Activated CD4-positive, alpha-beta memory T cell treated with anti-CD3 and anti-CD28 coated beads for 36 hours (primary cell): ENCODE measurements at regions of chr1 and their contacts with region 1.

Region 1: GRCh38 chr1:70354332-70355110 is at the start of gene ANKRD13C:
- DNase-seq: peak; percentile 95
- H3K4me3 Mint-ChIP-seq: peak within 1 kb of the TSS; percentile 93
- H3K27ac Mint-ChIP-seq: peak within 1 kb of the TSS; percentile 95
- H3K4me1 Mint-ChIP-seq: peaks cover 36% of the 10 kb centered on the region
- H3K27me3 Mint-ChIP-seq: no peaks in the 10 kb centered on the region
- total RNA-seq, gene ANKRD13C: 14.3 to 14.5 TPM

Region 2: DNA sequence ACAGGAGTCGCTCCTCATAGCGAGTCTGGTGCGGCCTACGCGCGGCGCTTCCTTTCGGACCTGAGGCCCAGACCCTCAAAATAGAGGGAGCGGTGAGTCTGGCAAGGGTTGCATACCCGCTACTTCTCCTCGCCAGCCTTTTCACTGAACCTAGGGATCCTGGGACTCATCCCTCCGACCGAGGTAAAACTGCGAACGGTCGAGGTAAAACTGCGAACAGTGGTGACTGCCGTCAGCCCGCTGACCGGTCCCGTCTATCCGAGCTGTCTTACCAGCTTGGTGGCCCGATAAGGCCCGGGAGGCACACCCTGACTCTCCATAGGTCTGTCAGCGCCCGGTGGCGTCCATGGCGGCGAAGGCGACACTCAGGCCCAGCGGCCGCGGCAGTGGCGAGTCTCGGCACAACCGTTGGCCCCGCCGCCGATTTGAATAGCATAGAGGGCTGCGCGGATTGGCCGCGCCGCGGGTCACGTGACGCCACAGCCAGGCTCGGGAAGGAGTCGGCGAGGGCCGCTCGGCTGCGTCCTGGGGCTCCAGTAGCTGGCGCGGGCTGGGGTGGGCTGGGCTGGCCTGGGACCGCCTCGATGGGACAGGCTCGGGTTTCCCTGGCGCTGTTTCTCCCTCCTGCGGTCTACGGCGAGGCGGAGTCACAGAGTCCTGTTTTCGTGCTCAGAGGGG is 1857.7 kb before region 1 on chr1 and contains the start of gene DEPDC1:
- CTCF ChIA-PET with region 1: no interaction called
- POLR2A ChIA-PET with region 1: no interaction called
- intact Hi-C with region 1: loop called (anchors 10 kb)
- DNase-seq: peak; percentile 87
- H3K4me3 Mint-ChIP-seq: peak within 1 kb of the TSS; percentile 86
- H3K27ac Mint-ChIP-seq: no peak within 1 kb of the TSS
- H3K4me1 Mint-ChIP-seq: peaks cover 19% of the 10 kb centered on the region
- H3K27me3 Mint-ChIP-seq: peaks cover 8% of the 10 kb centered on the region
- total RNA-seq, gene DEPDC1: 24.1 to 26.2 TPM

Region 3: GRCh38 chr1:70205434-70206118 is 148.9 kb before region 1 on chr1 and contains the start of gene LRRC40:
- CTCF ChIA-PET with region 1: no interaction called
- POLR2A ChIA-PET with region 1: interaction called, 8 read pairs
- intact Hi-C with region 1: loop called (anchors 1 kb)
- DNase-seq: peak; percentile 98
- H3K4me3 Mint-ChIP-seq: peak within 1 kb of the TSS; percentile 99
- H3K27ac Mint-ChIP-seq: peak within 1 kb of the TSS; percentile 94
- H3K4me1 Mint-ChIP-seq: peaks cover 63% of the 10 kb centered on the region
- H3K27me3 Mint-ChIP-seq: no peaks in the 10 kb centered on the region
- total RNA-seq, gene LRRC40: 22.1 to 24.7 TPM

Region 4: DNA sequence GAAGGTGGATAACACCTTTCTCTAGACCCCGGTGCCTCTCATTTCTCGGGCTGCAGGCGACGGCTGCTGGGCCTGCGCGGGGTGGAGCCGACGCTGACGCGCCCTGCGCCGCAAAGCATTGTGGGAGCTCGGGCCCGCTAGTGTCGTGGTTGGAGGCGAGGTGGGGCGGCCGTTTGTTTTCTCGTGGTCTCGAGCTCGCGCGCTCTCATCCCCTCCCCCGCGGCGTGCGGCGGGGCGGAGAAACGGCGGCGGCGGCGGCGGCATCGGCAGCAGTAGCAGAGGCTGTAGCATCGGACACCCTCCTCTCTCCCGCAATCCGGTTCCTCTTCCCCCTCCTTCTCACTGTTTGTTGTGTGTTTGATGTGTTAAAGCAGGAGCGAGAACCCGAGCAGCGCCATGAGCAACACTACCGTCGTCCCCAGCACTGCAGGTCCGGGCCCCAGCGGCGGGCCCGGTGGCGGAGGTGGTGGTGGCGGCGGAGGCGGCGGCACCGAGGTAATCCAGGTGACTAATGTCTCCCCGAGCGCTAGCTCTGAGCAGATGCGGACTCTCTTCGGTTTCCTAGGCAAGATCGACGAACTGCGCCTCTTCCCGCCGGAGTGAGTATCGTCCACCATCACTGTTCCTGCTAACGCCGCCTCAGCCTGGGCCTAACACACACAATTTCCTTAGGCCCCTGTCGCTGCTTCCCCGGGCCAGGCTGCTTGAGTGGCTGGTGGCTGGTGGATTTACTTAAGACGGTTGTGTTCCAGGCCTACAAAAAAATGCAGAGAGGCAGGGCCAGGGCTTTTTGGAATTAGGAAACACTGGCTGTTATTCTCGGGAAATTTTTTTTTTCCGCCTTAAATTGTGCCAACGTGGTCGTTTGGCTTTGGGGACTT is 133.0 kb before region 1 on chr1 and contains the start of gene SRSF11:
- CTCF ChIA-PET with region 1: interaction called, 3 read pairs
- POLR2A ChIA-PET with region 1: interaction called, 7 read pairs
- intact Hi-C with region 1: loop called (anchors 1 kb)
- DNase-seq: peak; percentile 98
- H3K4me3 Mint-ChIP-seq: peak within 1 kb of the TSS; percentile 91
- H3K27ac Mint-ChIP-seq: peak within 1 kb of the TSS; percentile 97
- H3K4me1 Mint-ChIP-seq: peaks cover 39% of the 10 kb centered on the region
- H3K27me3 Mint-ChIP-seq: no peaks in the 10 kb centered on the region
- total RNA-seq, gene SRSF11: 156 to 164 TPM

Region 5: DNA sequence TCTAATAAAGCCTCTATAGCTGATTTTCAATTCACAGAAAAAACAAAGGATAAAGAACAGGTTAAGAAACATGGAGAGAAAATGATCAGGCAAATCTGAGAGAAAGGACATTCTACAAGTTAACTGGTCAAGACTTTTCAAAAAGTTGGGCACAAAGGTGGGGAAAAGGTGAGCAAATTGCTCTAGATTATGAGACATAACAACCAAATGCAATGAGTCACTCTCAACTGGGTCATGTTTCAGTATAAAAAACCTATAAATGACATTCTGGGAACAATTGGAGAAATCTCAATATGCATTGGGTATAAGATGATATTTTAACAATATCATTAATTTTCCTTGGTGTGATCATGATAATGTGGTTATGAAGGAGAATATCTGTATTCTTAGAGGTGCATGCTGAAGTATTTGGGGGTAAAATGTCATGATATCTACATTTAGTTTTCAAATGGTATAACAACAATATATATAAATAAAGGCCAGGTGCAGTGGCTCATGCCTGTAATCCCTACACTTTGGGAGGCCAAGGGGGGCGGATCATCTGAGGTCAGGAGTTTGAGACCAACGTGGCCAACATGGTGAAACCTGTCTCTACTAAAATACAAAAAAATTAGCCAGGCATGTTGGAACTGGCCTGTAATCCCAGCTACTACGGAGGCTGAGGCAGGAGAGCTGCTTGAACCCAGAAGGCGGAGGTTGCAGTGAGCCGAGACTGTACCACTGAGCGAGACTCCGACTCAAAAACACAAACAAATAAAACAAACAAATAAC is 27.0 kb before region 1 on chr1:
- CTCF ChIA-PET with region 1: interaction called, 4 read pairs
- POLR2A ChIA-PET with region 1: no interaction called
- intact Hi-C with region 1: loop called (anchors 2 kb)
- DNase-seq: no peak
- H3K4me3 Mint-ChIP-seq: no peak overlapping the region
- H3K27ac Mint-ChIP-seq: no peak overlapping the region
- H3K4me1 Mint-ChIP-seq: peaks cover 16% of the 10 kb centered on the region
- H3K27me3 Mint-ChIP-seq: no peaks in the 10 kb centered on the region

Region 6: GRCh38 chr1:70397014-70397413 is 42.5 kb after region 1 on chr1:
- CTCF ChIA-PET with region 1: no interaction called
- POLR2A ChIA-PET with region 1: no interaction called
- intact Hi-C with region 1: no loop called
- DNase-seq: no peak
- H3K4me3 Mint-ChIP-seq: no peak overlapping the region
- H3K27ac Mint-ChIP-seq: no peak overlapping the region
- H3K4me1 Mint-ChIP-seq: no peaks in the 10 kb centered on the region
- H3K27me3 Mint-ChIP-seq: peaks cover 7% of the 10 kb centered on the region

Region 7: GRCh38 chr1:70504176-70504820 is 149.8 kb after region 1 on chr1:
- CTCF ChIA-PET with region 1: no interaction called
- POLR2A ChIA-PET with region 1: interaction called, 3 read pairs
- intact Hi-C with region 1: loop called (anchors 1 kb)
- DNase-seq: peak; percentile 46
- H3K4me3 Mint-ChIP-seq: no peak overlapping the region
- H3K27ac Mint-ChIP-seq: no peak overlapping the region
- H3K4me1 Mint-ChIP-seq: peaks cover 8% of the 10 kb centered on the region
- H3K27me3 Mint-ChIP-seq: peaks cover 10% of the 10 kb centered on the region

Region 8: GRCh38 chr1:71080739-71081696 is 726.5 kb after region 1 on chr1 and contains the start of gene ZRANB2:
- CTCF ChIA-PET with region 1: no interaction called
- POLR2A ChIA-PET with region 1: interaction called, 3 read pairs
- intact Hi-C with region 1: loop called (anchors 2 kb)
- DNase-seq: peak; percentile 91
- H3K4me3 Mint-ChIP-seq: peak within 1 kb of the TSS; percentile 98
- H3K27ac Mint-ChIP-seq: peak within 1 kb of the TSS; percentile 99
- H3K4me1 Mint-ChIP-seq: peaks cover 20% of the 10 kb centered on the region
- H3K27me3 Mint-ChIP-seq: peaks cover 16% of the 10 kb centered on the region
- total RNA-seq, gene ZRANB2: 105 to 107 TPM